ENCODE measurements at regions of chr3 and their contacts with region 1.

Region 1: DNA sequence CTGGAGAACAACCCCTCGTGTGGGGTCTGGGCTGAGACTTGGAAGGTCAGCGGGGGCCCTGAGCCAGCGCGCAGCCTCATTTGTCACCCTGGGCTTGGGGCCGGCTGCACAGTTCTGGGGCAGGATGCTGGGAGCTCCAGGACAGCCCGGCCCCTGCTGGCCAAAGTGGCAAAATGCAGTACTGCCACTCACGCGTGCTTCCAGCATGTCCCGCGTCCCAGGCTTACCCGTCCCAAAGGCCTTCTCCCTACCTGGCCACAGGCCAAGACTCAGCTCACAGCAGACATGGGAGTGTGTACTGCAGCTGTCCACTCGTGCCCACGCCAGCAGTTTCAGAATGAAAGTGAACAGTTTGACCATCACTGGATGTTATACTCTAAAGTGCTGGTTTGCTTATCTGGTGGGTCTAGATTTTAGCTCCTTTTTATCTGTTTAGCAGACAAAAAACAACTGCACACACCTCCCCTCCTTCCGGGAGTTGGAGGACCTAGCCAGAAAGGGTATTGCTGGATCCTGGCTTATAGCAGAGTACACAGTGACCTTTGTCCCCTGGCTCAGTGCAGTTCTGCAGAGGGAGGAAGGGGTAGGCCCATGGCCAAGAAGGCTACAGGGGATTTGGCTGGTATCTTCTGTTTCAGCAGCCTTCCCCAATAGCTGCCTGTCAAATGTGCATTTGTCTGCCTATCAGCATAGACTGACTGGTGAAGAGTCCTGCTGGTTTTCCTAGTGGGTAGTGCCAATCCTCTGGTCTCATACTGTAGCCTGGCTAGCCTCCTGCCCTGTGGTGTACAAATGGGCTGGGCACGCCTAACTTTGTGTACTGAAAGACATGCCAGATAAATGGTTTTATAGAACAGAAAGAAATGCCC is 23.2 kb upstream of the IP6K2 start:
- DNase-seq: peak; percentile 82 to 99 (median 90)

Region 2: DNA sequence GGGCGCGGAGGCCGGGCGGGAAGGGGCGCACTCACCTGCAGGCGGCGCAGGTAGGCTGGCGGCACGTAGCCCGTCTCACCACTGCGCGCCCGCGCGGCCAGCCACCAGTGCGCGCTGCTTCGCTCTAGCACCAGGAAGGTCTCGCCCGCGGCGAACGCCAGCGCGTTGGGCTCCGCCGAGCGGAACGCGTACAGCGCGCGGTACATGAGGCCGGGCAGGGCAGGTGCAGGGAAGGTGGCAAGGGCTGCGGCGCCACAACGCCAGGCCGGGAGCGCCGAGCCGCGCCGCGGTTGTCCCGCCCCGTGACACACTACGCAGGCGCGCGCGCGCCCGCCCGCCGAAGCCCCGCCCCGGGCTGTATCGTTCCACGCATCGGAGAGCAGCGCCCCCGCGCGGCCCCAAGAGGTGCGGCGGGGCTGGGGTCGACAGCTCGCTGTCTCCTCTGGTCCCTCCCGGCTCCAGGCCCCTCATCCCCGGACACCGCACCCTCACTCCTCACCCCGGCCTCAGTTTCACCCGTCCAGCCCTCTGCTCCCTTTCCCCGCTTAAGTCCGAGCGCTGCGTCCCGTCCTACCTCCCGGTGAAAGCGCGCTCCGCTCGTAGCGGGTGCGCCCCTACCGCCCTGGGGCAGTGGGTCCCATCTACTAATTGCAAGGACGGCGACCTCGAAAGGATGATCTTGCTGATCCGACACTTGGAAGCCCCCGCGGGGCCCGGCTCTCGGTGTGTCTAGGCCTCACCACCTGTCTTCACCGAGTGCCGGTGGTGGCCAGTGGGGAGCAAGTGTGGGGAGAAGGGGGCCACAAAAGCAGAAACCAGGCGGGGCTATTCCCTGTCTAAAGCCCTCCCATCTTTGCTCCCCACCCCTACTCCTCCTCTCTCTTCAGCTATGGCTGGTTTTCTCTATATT is 54.3 kb before region 1 on chr3 and contains the start of gene NCKIPSD:
- intact Hi-C with region 1: loop called (anchors 2 kb)
- DNase-seq: peak; percentile 79 to 98 (median 85)

Region 3: DNA sequence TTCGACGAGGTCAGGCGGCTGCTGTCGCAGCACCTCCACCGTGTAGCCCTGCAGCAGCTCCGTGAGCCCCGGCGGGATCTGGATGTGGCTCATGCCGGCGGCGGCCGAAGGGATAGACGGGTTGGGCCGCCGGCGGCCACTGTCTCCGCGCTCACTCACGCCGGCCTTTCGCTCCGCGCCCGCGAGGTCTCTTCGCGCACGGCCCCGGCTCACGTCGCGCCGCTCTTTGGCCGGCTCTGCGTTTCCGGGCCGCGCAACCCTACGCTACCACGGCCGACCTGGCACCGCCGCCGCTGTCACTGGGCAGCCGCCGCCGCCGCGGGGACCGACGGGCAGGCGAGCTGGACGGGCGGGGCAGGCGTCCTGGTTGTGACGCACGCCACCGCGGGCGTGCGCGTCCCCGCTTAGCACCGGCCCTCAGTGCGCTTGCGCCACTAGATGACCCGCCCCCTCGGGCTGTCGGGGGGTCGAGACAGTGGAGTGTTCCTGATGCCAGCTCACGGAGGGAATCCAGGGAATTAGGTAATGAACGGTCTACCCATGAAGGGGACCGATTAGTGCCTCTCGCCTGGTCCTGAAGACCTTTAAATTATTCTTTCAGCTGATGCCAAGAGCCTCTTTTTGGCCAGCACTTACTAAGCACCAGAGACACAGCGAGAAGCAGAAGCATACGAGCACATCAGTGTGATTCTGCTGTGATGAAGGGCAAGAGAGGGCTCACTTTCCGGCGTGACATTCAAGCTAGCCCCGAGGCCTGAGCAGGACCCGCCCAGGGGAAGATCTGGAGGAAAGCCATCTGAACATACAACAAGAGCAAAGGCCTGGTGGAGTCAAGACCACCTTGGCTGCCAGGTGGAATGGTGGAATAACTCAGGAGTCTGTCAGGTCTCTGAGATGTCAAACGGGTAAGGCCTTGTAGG is 107.6 kb after region 1 on chr3 and contains the start of gene PRKAR2A:
- intact Hi-C with region 1: loop called (anchors 10 kb)
- DNase-seq: peak; percentile 83 to 98 (median 88)

Measured in posterior cingulate gyrus (tissue), 11 donors.